HepG2 (cell line): ENCODE measurements at regions of chr6 and their contacts with region 1.

Region 1: GRCh38 chr6:139219271-139219729 is 72.5 kb downstream of the TXLNB start:
- DNase-seq: peak; percentile 75
- ATAC-seq: peak; percentile 100
- H3K4me3 ChIP-seq: no peak overlapping the region
- H3K27ac ChIP-seq: no peak overlapping the region
- H3K4me1 ChIP-seq: no peaks in the 10 kb centered on the region
- H3K27me3 ChIP-seq: no peaks in the 10 kb centered on the region
- CTCF ChIP-seq: peak; percentile 97
- EP300 ChIP-seq: no peak
- POLR2A ChIP-seq: no peak
- RAD21 ChIP-seq: peak; percentile 86

Region 2: DNA sequence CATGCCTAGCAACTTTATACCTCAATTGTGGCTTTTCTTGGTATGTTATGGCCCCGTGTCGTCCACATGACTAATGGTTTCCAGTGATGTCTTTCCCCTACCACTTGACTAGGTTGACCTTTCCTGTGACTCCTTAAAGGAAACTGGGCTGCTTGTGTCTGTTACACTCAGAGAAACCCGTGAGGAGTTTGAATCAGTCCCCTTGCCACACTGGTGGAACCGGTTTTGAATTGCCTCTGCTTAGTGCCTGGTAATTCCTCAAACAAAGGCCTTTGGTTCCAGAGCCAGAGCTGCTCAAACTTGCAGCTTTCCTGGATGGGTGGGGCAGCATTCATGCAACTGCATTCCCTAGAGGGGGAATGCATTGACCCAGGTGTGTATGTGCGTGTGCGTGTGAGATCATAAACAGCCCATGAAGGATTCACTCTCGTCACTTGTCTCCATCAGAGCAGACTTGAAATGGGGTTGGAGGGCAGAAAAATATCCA is 401.4 kb before region 1 on chr6:
- CTCF ChIA-PET with region 1: interaction called, 3 read pairs
- POLR2A ChIA-PET with region 1: no interaction called
- in situ Hi-C with region 1: no loop called
- intact Hi-C with region 1: loop called (anchors 1 kb)
- DNase-seq: no peak
- ATAC-seq: no peak
- H3K4me3 ChIP-seq: no peak overlapping the region
- H3K27ac ChIP-seq: no peak overlapping the region
- H3K4me1 ChIP-seq: peaks cover 57% of the 10 kb centered on the region
- H3K27me3 ChIP-seq: peaks cover 0 to 13% of the 10 kb centered on the region in 2 experiments; a peak in 1 of 5 replicates
- CTCF ChIP-seq: no peak
- EP300 ChIP-seq: no peak
- POLR2A ChIP-seq: no peak
- RAD21 ChIP-seq: no peak

Region 3: DNA sequence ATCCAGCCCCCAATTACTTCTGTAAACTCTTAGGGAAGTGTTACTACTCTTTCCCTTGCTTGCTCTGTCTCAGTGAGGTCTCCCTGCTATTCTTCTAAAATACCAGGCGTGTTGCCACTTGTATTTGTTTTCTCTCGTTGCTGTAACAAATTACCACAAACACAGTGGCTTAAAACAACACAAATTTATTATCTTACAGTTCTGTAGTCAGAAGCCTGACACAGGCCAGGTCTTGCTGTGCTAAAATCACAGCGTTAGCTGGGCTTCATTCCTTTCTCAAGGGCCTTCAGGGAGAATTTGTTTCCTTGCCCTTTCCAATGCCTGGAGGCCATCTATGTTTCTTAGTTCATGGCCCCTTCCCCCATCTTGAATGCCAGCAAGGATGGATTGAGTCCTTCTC is 24.5 kb before region 1 on chr6:
- CTCF ChIA-PET with region 1: no interaction called
- POLR2A ChIA-PET with region 1: no interaction called
- in situ Hi-C with region 1: no loop called
- intact Hi-C with region 1: no loop called
- DNase-seq: no peak
- ATAC-seq: no peak
- H3K4me3 ChIP-seq: no peak overlapping the region
- H3K27ac ChIP-seq: no peak overlapping the region
- H3K4me1 ChIP-seq: no peaks in the 10 kb centered on the region
- H3K27me3 ChIP-seq: peaks cover 0 to 3% of the 10 kb centered on the region in 2 experiments; a peak in 1 of 5 replicates
- CTCF ChIP-seq: no peak
- EP300 ChIP-seq: no peak
- POLR2A ChIP-seq: no peak
- RAD21 ChIP-seq: no peak

Region 4: GRCh38 chr6:139262519-139263300 is 43.4 kb after region 1 on chr6:
- CTCF ChIA-PET with region 1: no interaction called
- POLR2A ChIA-PET with region 1: no interaction called
- in situ Hi-C with region 1: no loop called
- intact Hi-C with region 1: no loop called
- DNase-seq: no peak
- ATAC-seq: no peak
- H3K4me3 ChIP-seq: no peak overlapping the region
- H3K27ac ChIP-seq: no peak overlapping the region
- H3K4me1 ChIP-seq: no peaks in the 10 kb centered on the region
- H3K27me3 ChIP-seq: 0 out of 5 replicates have a peak, but pooled peaks cover 0 to 3% of the 10 kb centered on the region in 2 experiments
- CTCF ChIP-seq: no peak
- EP300 ChIP-seq: no peak
- POLR2A ChIP-seq: no peak
- RAD21 ChIP-seq: no peak

Region 5: GRCh38 chr6:139355172-139355571 is 135.9 kb after region 1 on chr6:
- CTCF ChIA-PET with region 1: no interaction called
- POLR2A ChIA-PET with region 1: no interaction called
- in situ Hi-C with region 1: loop called (anchors 10 kb)
- intact Hi-C with region 1: no loop called
- DNase-seq: no peak
- ATAC-seq: no peak
- H3K4me3 ChIP-seq: no peak overlapping the region
- H3K27ac ChIP-seq: no peak overlapping the region
- H3K4me1 ChIP-seq: peaks cover 8% of the 10 kb centered on the region
- H3K27me3 ChIP-seq: no peaks in the 10 kb centered on the region
- CTCF ChIP-seq: no peak
- EP300 ChIP-seq: no peak
- POLR2A ChIP-seq: no peak
- RAD21 ChIP-seq: no peak

Region 6: DNA sequence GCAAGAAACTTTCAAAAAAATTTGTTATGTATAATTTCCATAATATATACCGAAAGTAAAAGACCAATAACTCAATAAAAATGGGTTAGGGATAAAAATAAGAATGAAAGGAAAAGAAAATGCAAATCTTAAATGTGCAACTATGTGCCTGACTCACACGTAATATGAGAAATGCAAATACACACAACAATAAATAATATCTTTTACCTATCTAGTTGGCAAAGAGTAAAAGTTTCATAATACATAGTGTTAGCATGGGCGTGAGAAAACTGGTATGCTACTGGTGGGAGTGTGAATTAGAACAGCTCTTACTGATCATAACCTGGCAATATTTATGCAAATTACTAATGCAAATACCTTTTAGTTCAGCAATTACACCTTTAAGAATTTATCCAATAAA is 593.6 kb after region 1 on chr6:
- CTCF ChIA-PET with region 1: no interaction called
- POLR2A ChIA-PET with region 1: no interaction called
- in situ Hi-C with region 1: no loop called
- intact Hi-C with region 1: no loop called
- DNase-seq: no peak
- ATAC-seq: no peak
- H3K4me3 ChIP-seq: no peak overlapping the region
- H3K27ac ChIP-seq: no peak overlapping the region
- H3K4me1 ChIP-seq: no peaks in the 10 kb centered on the region
- H3K27me3 ChIP-seq: no peaks in the 10 kb centered on the region
- CTCF ChIP-seq: no peak
- EP300 ChIP-seq: no peak
- POLR2A ChIP-seq: no peak
- RAD21 ChIP-seq: no peak